ENCODE measurements at regions of chr10 and their contacts with region 1.

Region 1: GRCh38 chr10:59319854-59320253 is 42.5 kb downstream of the FAM13C start:
- DNase-seq: no peak
- H3K4me3 ChIP-seq: no peak overlapping the region
- H3K27ac ChIP-seq: no peak overlapping the region
- H3K4me1 ChIP-seq: no peaks in the 10 kb centered on the region
- CTCF ChIP-seq: no peak

Region 2: GRCh38 chr10:59303018-59303417 is 16.8 kb before region 1 on chr10:
- CTCF ChIA-PET with region 1: no interaction called
- POLR2A ChIA-PET with region 1: interaction called, 10 read pairs
- intact Hi-C with region 1: no loop called
- DNase-seq: no peak
- H3K4me3 ChIP-seq: no peak overlapping the region
- H3K27ac ChIP-seq: no peak overlapping the region
- H3K4me1 ChIP-seq: no peaks in the 10 kb centered on the region
- CTCF ChIP-seq: no peak